ENCODE measurements at regions of chr2 and their contacts with region 1.

Region 1: GRCh38 chr2:173448938-173449471 is 94.3 kb downstream of the CDCA7 start:
- DNase-seq: peak; percentile 92
- H3K4me3 Mint-ChIP-seq: peak overlapping the region; percentile 73
- H3K27ac Mint-ChIP-seq: peak overlapping the region; percentile 64
- H3K4me1 Mint-ChIP-seq: no peaks in the 10 kb centered on the region
- H3K27me3 Mint-ChIP-seq: peaks cover 41% of the 10 kb centered on the region
- CTCF ChIP-seq: peak; percentile 82

Region 2: GRCh38 chr2:173402405-173402974 is 46.5 kb before region 1 on chr2:
- CTCF ChIA-PET with region 1: interaction called, 145 read pairs
- POLR2A ChIA-PET with region 1: interaction called, 20 read pairs
- intact Hi-C with region 1: loop called (anchors 1 kb)
- DNase-seq: peak; percentile 87
- H3K4me3 Mint-ChIP-seq: peak overlapping the region; percentile 6
- H3K27ac Mint-ChIP-seq: no peak overlapping the region
- H3K4me1 Mint-ChIP-seq: peaks cover 11% of the 10 kb centered on the region
- H3K27me3 Mint-ChIP-seq: peaks cover 64% of the 10 kb centered on the region
- CTCF ChIP-seq: peak; percentile 86

Region 3: DNA sequence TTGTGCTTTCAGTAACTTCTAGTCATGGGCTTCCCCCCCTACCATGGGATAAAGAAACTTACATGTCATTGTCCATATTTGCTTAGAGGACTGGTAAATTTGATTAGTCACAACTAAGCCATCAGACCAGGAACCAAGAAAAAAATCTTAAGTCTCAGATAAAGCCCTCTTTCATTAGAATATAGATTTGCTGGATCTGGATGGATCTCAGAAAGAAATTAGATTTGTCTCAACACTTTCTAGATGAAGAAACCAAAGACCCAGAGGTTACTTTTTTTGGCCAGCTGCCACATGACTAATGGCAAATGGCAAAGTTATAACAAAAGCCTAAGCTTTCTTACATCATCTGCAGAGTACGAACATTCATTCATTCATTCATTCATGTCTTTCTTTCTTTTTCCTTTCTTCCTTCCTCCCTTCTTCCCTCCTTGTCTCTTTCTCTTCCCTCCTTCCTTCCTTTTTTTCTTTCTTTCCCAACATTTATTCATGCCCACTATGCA is 34.1 kb before region 1 on chr2:
- CTCF ChIA-PET with region 1: interaction called, 13 read pairs
- POLR2A ChIA-PET with region 1: interaction called, 3 read pairs
- intact Hi-C with region 1: no loop called
- DNase-seq: peak; percentile 97
- H3K4me3 Mint-ChIP-seq: no peak overlapping the region
- H3K27ac Mint-ChIP-seq: no peak overlapping the region
- H3K4me1 Mint-ChIP-seq: peaks cover 11% of the 10 kb centered on the region
- H3K27me3 Mint-ChIP-seq: peaks cover under 1% of the 10 kb centered on the region
- CTCF ChIP-seq: no peak

Region 4: GRCh38 chr2:173427887-173428600 is 21.0 kb before region 1 on chr2:
- CTCF ChIA-PET with region 1: interaction called, 18 read pairs
- POLR2A ChIA-PET with region 1: interaction called, 12 read pairs
- intact Hi-C with region 1: no loop called
- DNase-seq: peak; percentile 95
- H3K4me3 Mint-ChIP-seq: peak overlapping the region; percentile 21
- H3K27ac Mint-ChIP-seq: peak overlapping the region; percentile 59
- H3K4me1 Mint-ChIP-seq: peaks cover 30% of the 10 kb centered on the region
- H3K27me3 Mint-ChIP-seq: peaks cover 30% of the 10 kb centered on the region
- CTCF ChIP-seq: no peak

Region 5: GRCh38 chr2:173488861-173489260 is 39.9 kb after region 1 on chr2:
- CTCF ChIA-PET with region 1: no interaction called
- POLR2A ChIA-PET with region 1: no interaction called
- intact Hi-C with region 1: no loop called
- DNase-seq: no peak
- H3K4me3 Mint-ChIP-seq: no peak overlapping the region
- H3K27ac Mint-ChIP-seq: no peak overlapping the region
- H3K4me1 Mint-ChIP-seq: no peaks in the 10 kb centered on the region
- H3K27me3 Mint-ChIP-seq: no peaks in the 10 kb centered on the region
- CTCF ChIP-seq: no peak